ENCODE measurements at regions of chr2 and their contacts with region 1.

Region 1: GRCh38 chr2:55628931-55629330 is 11.5 kb upstream of the PPP4R3B start:
- DNase-seq: no peak
- H3K4me3 ChIP-seq: no peak overlapping the region
- H3K27ac ChIP-seq: no peak overlapping the region
- H3K4me1 ChIP-seq: no peaks in the 10 kb centered on the region
- H3K27me3 ChIP-seq: no peaks in the 10 kb centered on the region
- CTCF ChIP-seq: no peak
- POLR2A ChIP-seq: no peak

Region 2: DNA sequence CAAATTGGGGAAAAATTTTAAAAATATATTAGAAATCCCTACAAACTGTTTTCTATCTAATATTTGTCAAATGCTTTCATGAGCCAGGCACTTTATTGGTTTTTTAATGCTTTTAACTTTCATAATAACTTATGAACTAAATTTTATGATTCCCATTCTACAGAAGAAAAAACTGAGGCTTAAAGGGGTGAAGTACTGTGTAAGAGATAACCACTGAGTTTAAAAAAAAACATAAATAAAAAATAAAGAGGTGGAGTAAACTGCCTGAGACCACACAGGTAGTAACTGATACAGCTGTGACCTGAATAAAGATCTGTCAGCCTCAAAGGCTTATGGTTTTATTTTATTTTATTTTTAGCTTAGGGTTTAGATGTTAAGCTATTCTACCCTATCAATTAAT is 40.0 kb after region 1 on chr2:
- intact Hi-C with region 1: loop called (anchors 5 kb)
- DNase-seq: no peak
- H3K4me3 ChIP-seq: no peak overlapping the region
- H3K27ac ChIP-seq: no peak overlapping the region
- H3K4me1 ChIP-seq: no peaks in the 10 kb centered on the region
- H3K27me3 ChIP-seq: no peaks in the 10 kb centered on the region
- CTCF ChIP-seq: no peak
- POLR2A ChIP-seq: no peak

Measured in uterus (tissue), 4 donors.